ENCODE measurements at regions of chr10 and their contacts with region 1.

Region 1: DNA sequence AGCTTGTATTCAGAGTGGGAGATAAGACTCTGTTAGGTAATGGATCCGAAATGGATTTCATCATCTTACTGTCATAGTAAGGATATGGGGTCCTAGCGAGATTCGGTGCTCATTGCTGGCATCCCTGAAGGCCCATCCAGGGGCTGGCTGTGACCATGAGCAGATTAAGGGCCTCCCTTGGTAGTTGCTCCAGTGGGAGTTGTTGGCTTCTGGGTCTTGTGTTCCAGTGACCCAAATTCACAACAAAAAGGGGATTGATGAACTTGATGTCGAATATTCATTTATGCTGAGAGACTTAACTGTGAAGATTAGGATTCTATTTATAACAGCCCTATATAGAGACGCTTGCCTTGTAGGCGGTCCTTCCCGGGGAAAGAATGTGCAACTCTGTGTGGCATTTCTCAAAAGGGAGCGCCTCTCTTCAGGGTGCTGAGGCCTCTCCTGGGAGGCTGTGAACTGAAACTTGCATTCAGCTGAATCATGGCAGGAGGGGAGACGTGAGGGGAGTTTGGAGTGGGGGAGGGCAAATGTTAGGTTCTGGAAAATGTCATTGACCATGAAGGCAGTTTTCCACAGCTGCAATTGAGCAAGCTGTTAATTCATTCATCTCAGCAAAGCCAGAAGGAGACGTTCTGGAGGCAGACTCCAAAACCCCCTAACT is 233.1 kb upstream of the FZD8 start:
- H3K4me3 ChIP-seq: no peak overlapping the region
- H3K27ac ChIP-seq: no peak overlapping the region
- H3K4me1 ChIP-seq: no peaks in the 10 kb centered on the region
- CTCF ChIP-seq: no peak

Region 2: GRCh38 chr10:35898716-35899440 is 23.7 kb after region 1 on chr10:
- CTCF ChIA-PET with region 1: interaction called, 11 read pairs
- POLR2A ChIA-PET with region 1: no interaction called
- H3K4me3 ChIP-seq: no peak overlapping the region
- H3K27ac ChIP-seq: no peak overlapping the region
- H3K4me1 ChIP-seq: no peaks in the 10 kb centered on the region
- CTCF ChIP-seq: no peak